Lower leg skin (tissue), 4 donors: ENCODE measurements at regions of chr11 and their contacts with region 1.

Region 1: DNA sequence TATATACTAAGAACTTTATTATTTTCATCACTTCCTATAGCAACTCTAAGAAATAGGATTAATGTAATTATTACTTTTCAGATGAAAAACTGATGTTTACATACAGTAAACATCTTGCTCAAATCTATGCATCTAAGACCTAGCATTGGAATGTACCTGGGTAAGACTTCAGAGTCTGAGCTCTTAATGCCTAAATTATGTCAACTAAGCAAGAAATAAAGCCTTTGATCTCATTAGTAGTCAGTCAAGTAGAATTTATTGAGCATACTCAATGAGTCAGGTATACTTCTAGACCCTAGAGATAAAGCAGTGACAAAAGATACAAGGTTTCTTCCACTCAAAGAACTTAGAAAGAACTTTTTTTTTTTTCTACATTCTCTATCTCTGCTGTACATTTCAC is 16.7 kb upstream of the OR51Q1 start:
- DNase-seq: no peak
- H3K4me3 ChIP-seq: no peak overlapping the region
- CTCF ChIP-seq: no peak
- POLR2A ChIP-seq: no peak

Region 2: GRCh38 chr11:5420993-5421392 is 15.8 kb after region 1 on chr11:
- intact Hi-C with region 1: loop called (anchors 2 kb)
- DNase-seq: peak in 1 of 2 donors; percentile 77
- H3K4me3 ChIP-seq: no peak overlapping the region
- CTCF ChIP-seq: no peak
- POLR2A ChIP-seq: no peak